ENCODE measurements at regions of chr11 and their contacts with region 1.

Region 1: DNA sequence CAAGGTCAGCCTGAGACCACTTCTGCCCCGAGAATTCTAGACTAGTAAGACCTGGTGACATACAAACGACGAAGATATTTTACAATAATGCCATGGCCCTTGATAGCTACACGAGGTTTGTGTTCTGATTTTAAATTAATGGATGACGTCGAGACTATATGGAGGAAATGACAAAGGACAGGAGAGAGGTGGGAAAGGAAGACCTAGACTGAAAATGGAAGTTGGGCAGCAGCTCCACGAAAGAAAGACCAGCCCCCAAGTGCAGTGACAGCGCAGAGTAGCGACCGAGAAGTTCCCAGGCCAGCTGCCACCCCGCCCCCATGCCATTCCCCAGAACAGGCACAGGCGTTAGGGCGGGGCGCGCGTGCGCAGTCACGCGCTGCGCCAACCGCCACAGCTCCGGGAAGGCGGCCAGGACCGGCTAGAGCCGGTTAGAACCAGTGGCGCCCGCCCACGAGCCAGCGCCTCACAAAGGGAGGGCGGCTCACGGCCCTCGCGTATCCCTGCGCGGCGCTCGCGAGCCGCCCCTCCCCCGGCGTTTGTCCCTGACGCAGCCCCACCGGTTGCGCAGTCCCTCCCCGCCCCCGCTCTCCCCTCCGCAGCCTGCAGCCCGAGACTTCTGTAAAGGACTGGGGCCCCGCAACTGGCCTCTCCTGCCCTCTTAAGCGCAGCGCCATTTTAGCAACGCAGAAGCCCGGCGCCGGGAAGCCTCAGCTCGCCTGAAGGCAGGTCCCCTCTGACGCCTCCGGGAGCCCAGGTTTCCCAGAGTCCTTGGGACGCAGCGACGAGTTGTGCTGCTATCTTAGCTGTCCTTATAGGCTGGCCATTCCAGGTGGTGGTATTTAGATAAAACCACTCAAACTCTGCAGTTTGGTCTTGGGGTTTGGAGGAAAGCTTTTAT is 1.5 kb upstream of the MALAT1 start:
- DNase-seq: peak; percentile 99
- H3K4me3 ChIP-seq: peak overlapping the region; percentile 1 to 88 (median 42)
- H3K27ac ChIP-seq: peak overlapping the region; percentile 97 to 99 (median 97)
- H3K4me1 ChIP-seq: peaks cover 48% of the 10 kb centered on the region in 2 donors
- H3K27me3 ChIP-seq: no peaks in the 10 kb centered on the region
- CTCF ChIP-seq: no peak
- POLR2A ChIP-seq: peak; percentile 71 to 86

Region 2: GRCh38 chr11:65421803-65422690 is 75.3 kb before region 1 on chr11:
- intact Hi-C with region 1: loop called in 1 of 2 experiments (anchors 5 kb)
- DNase-seq: peak; percentile 98 to 99 (median 98)
- H3K4me3 ChIP-seq: peak overlapping the region in 2 of 4 donors; percentile 82 to 83
- H3K27ac ChIP-seq: peak overlapping the region; percentile 91 to 100 (median 100)
- H3K4me1 ChIP-seq: peaks cover 44 to 53% of the 10 kb centered on the region in 2 donors
- H3K27me3 ChIP-seq: no peaks in the 10 kb centered on the region
- CTCF ChIP-seq: no peak
- POLR2A ChIP-seq: peak in 1 of 2 donors; percentile 86

Measured in adrenal gland (tissue), 19 donors.